AG04449 (cell line): ENCODE measurements at regions of chr2 and their contacts with region 1.

Region 1: DNA sequence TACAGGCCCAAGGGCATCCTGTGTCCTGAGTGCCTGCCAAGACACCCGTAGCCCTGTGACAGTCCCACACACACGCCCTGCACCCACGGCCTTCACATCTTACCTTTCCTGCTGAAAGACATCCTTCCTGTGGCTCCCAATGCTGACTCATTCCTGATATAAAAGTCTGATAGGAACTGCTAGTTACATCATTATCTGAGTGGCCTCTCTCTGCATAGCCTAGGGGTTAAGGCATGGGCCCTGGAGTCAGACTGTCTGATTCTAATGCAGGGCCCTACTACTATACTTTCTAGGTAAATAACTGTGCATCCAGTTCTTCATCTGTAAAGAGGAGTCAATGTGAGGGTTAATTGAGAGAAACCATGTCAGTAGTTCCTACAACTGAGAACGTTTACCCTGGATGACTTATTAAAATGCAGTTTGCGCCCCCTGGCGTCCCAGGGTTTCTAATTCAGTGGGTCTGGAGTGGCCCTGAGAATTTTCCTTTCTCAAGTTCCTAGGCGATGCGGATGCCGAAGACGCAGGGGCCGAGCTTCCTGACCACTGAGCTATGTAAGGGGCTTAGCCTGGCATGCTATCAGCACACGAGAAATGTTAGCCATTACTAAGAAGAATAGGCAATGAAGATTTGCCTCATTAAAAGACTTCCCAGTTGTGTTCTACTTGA is 6.0 kb upstream of the GPR45 start:
- DNase-seq: no peak
- H3K4me3 ChIP-seq: no peak overlapping the region
- CTCF ChIP-seq: peak; percentile 71

Region 2: GRCh38 chr2:105102963-105103421 is 132.5 kb before region 1 on chr2:
- CTCF ChIA-PET with region 1: interaction called, 586 read pairs
- POLR2A ChIA-PET with region 1: no interaction called
- DNase-seq: peak; percentile 23
- H3K4me3 ChIP-seq: no peak overlapping the region
- CTCF ChIP-seq: no peak

Region 3: GRCh38 chr2:105187531-105187930 is 48.0 kb before region 1 on chr2:
- CTCF ChIA-PET with region 1: interaction called, 13 read pairs
- POLR2A ChIA-PET with region 1: no interaction called
- DNase-seq: no peak
- H3K4me3 ChIP-seq: no peak overlapping the region
- CTCF ChIP-seq: no peak

Region 4: GRCh38 chr2:105220604-105221003 is 14.9 kb before region 1 on chr2:
- CTCF ChIA-PET with region 1: interaction called, 41 read pairs
- POLR2A ChIA-PET with region 1: no interaction called
- DNase-seq: no peak
- H3K4me3 ChIP-seq: no peak overlapping the region
- CTCF ChIP-seq: no peak

Region 5: DNA sequence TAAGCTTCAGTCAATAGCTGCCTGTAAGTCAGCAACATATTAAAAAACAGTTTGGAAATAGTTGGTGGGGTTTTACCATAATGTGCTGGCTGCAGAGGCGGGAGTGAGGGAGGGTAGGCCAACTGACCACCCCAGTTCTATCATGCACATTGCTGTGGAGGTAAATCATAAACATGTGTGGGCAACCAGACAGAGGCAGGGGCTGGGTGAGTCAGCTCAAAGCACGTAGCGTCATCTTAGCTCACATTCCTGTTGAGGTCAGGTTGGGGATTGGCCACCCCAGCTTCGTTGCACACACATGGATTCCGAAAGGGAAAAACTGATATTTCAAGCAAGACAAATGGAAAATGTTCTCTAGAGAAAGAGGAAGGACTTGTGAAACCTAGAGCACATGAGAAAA is 25.5 kb after region 1 on chr2:
- CTCF ChIA-PET with region 1: interaction called, 21 read pairs
- POLR2A ChIA-PET with region 1: interaction called, 3 read pairs
- DNase-seq: peak; percentile 88
- H3K4me3 ChIP-seq: no peak overlapping the region
- CTCF ChIP-seq: no peak